WTC11 (cell line): ENCODE measurements at regions of chr9 and their contacts with region 1.

Region 1: DNA sequence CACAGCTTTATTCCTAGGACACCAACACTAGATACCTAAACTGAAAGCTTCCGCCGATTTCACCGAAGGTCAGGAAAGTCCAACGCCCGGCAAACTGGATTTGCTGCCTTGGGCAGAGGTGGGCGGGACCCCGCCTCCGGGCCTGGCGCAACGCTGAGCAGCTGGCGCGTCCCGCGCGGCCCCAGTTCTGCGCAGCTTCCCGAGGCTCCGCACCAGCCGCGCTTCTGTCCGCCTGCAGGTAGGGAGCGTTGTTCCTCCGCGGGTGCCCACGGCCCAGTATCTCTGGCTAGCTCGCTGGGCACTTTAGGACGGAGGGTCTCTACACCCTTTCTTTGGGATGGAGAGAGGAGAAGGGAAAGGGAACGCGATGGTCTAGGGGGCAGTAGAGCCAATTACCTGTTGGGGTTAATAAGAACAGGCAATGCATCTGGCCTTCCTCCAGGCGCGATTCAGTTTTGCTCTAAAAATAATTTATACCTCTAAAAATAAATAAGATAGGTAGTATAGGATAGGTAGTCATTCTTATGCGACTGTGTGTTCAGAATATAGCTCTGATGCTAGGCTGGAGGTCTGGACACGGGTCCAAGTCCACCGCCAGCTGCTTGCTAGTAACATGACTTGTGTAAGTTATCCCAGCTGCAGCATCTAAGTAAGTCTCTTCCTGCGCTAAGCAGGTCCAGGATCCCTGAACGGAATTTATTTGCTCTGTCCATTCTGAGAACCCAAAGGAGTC is at the start of gene CD274:
- DNase-seq: peak; percentile 90
- ATAC-seq: peak; percentile 100
- H3K4me3 Mint-ChIP-seq: peak within 1 kb of the TSS; percentile 71
- H3K27ac Mint-ChIP-seq: no peak within 1 kb of the TSS
- H3K4me1 Mint-ChIP-seq: peaks cover 3% of the 10 kb centered on the region; the same call in 1 of the 2 replicates
- H3K27me3 Mint-ChIP-seq: 0 out of 2 replicates have a peak, but pooled peaks cover 3% of the 10 kb centered on the region
- CTCF ChIP-seq: no peak
- total RNA-seq, gene CD274: 0.05 to 0.42 TPM (median 0.21 TPM) in 3 replicates

Region 2: GRCh38 chr9:5437254-5438216 is 13.0 kb before region 1 on chr9 and contains the start of gene PLGRKT:
- CTCF ChIA-PET with region 1: interaction called, 19 read pairs
- POLR2A ChIA-PET with region 1: interaction called, 9 read pairs
- DNase-seq: peak; percentile 91
- ATAC-seq: peak; percentile 97
- H3K4me3 Mint-ChIP-seq: peak within 1 kb of the TSS; percentile 95
- H3K27ac Mint-ChIP-seq: peak within 1 kb of the TSS; percentile 97
- H3K4me1 Mint-ChIP-seq: peaks cover 24% of the 10 kb centered on the region
- H3K27me3 Mint-ChIP-seq: no peaks in the 10 kb centered on the region
- CTCF ChIP-seq: no peak
- total RNA-seq, gene PLGRKT: 19.2 to 26.3 TPM (median 25.0 TPM) in 3 replicates

Region 3: GRCh38 chr9:5470816-5471215 is 20.3 kb after region 1 on chr9:
- CTCF ChIA-PET with region 1: no interaction called
- POLR2A ChIA-PET with region 1: no interaction called
- DNase-seq: no peak
- ATAC-seq: no peak
- H3K4me3 Mint-ChIP-seq: no peak overlapping the region
- H3K27ac Mint-ChIP-seq: no peak overlapping the region
- H3K4me1 Mint-ChIP-seq: peaks cover 3% of the 10 kb centered on the region; the same call in 1 of the 2 replicates
- H3K27me3 Mint-ChIP-seq: peaks cover 15% of the 10 kb centered on the region
- CTCF ChIP-seq: no peak

Region 4: GRCh38 chr9:5582835-5583195 is 132.3 kb after region 1 on chr9:
- CTCF ChIA-PET with region 1: interaction called, 37 read pairs
- POLR2A ChIA-PET with region 1: no interaction called
- DNase-seq: no peak
- ATAC-seq: no peak
- H3K4me3 Mint-ChIP-seq: no peak overlapping the region
- H3K27ac Mint-ChIP-seq: no peak overlapping the region
- H3K4me1 Mint-ChIP-seq: peaks cover 5% of the 10 kb centered on the region; the same call in 1 of the 2 replicates
- H3K27me3 Mint-ChIP-seq: peaks cover 5% of the 10 kb centered on the region; the same call in 1 of the 2 replicates
- CTCF ChIP-seq: no peak